GM13977 (cell line): ENCODE measurements at regions of chr12 and their contacts with region 1.

Region 1: GRCh38 chr12:21642707-21643389 is 14.8 kb downstream of the LDHB start:
- DNase-seq: no peak
- CTCF ChIP-seq: no peak

Region 2: DNA sequence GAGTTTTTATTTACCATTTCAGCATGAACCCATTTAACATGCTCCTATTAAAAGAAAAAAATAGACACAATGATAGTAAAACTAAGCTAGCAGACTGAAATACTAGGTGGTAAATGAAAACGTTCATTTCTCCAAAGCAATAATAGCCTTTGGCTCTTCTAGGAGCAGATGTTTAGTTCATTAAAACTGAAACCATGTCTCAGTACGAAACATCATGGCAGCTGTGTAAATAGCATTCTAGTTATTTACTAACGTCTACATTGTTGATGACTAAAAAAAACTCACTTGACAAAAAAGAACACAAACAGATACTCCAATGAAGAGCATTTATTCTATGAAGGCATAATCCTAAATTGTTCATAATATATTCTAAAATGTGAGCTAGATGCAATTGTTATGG is 159.3 kb before region 1 on chr12:
- in situ Hi-C with region 1: no loop called
- DNase-seq: no peak
- CTCF ChIP-seq: no peak

Region 3: GRCh38 chr12:21501379-21501956 is 141.4 kb before region 1 on chr12 and contains the starts of genes GOLT1B and RECQL:
- in situ Hi-C with region 1: loop called (anchors 10 kb)
- DNase-seq: peak; percentile 90
- CTCF ChIP-seq: no peak

Region 4: DNA sequence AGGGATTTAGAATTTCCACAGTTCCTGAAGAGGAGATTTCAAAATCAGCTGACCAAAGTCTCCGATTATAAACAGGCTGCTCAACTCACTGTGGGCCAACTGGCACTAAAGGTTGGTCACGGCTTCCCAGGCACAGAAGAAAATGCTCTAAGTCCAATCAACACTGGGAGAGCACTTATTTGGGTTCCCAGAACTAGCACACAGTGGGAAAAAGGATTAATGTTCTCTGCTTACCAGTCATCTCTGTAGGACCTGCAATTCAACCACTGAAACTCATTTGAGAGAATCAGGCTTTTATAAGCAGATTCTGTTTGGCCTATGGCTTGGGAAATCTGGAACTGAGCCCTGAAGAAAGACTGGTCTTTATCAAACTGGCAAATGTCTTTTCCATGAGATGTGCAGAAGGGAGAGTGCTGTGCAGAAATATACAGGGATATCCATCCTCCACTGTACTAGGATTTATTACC is 248.9 kb after region 1 on chr12:
- in situ Hi-C with region 1: no loop called
- DNase-seq: no peak
- CTCF ChIP-seq: no peak